SK-N-SH (cell line): ENCODE measurements at regions of chr12 and their contacts with region 1.

Region 1: GRCh38 chr12:122123051-122123760 is 44.6 kb downstream of the MLXIP start:
- DNase-seq: peak; percentile 86
- H3K4me3 ChIP-seq: no peak overlapping the region
- H3K27ac ChIP-seq: peak overlapping the region in 1 of 2 experiments; percentile 32; a peak in 1 of 4 replicates
- H3K4me1 ChIP-seq: peaks cover 2 to 4% of the 10 kb centered on the region in 2 experiments; a peak in 2 of 4 replicates
- H3K27me3 ChIP-seq: no peaks in the 10 kb centered on the region
- CTCF ChIP-seq: peak; percentile 78
- EP300 ChIP-seq: no peak
- RAD21 ChIP-seq: peak; percentile 89

Region 2: DNA sequence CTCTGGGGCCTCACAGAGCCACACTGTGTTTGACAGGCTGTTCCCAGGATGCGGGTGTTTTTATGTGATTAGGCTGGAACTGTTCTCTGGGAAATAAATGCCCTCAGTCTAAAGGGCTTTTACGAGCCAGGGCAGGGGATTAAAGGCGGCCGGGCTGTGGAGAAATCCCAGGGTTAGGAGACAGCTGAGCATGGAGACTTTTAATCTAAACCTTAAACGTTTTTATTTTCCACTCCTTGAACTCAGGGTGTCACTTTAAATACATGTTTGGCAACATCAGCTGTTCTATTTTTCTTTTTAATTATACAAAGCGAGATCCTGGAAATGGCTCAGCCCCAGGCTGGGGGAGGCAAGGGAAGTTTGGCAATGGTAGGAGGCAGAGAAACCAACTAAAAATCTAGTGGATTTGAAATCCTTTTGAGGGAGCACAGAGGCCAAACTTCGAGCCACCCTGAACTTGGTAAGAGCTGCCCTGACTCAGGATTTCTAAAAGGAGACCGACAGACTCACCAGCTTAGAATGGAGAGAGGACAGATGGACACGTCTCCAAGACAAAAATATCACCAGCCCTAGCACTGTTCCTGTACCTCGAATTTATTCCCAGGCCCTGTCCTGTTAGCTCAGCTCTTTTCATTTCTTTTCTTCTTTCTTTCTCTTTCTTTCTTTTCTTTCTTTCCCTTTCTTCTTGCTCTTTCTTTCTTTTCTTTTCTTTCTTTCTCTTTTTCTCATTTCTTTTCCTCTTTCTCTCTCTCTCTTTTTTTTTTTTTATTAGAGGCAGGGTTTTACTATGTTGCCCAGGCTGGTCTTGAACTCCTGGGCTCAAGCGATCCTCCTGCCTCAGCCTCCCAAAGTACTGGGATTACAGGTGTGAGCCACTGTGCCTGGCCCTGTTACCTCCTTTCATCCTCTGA is 512.7 kb before region 1 on chr12:
- CTCF ChIA-PET with region 1: no interaction called
- POLR2A ChIA-PET with region 1: no interaction called
- DNase-seq: no peak
- H3K4me3 ChIP-seq: no peak overlapping the region
- H3K27ac ChIP-seq: no peak overlapping the region
- H3K4me1 ChIP-seq: peaks cover 0 to 7% of the 10 kb centered on the region in 2 experiments; a peak in 1 of 4 replicates
- H3K27me3 ChIP-seq: no peaks in the 10 kb centered on the region
- CTCF ChIP-seq: no peak
- EP300 ChIP-seq: no peak
- RAD21 ChIP-seq: no peak

Region 3: DNA sequence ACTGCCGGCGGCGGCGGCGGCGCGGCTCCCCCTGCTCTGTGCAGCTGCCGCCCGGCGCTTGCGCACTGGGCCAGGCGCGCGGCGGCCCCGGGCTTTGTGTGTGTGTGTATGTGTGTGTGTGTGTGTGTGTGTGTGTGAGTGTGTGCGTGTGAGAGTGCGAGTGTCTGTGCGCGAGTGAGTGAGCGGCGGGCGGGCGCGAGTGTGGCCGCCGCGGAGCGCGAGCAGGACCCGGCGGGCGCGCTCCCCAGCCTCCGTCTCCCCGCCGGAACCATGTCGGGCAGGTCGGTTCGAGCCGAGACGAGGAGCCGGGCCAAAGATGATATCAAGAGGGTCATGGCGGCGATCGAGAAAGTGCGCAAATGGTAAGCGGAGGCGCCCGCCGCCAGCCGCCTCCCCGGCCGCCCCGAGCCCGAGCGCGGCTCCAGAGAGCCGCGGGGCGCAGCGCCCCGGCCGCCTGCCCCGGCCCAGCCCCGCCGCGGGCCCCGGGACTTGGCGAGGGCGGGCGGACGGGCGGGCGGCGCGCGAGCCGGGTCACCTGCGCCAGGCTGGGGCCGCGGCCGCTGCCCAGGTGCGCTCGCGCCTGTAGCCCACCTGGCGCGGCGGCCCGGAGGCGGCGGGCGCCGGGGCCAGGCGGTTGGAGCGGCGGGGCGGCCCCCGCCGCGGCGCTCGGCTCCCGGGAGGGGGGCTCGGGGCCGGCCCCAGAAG is 101.2 kb before region 1 on chr12 and contains the start of gene BCL7A:
- CTCF ChIA-PET with region 1: interaction called, 16 read pairs
- POLR2A ChIA-PET with region 1: no interaction called
- DNase-seq: peak; percentile 92
- H3K4me3 ChIP-seq: peak within 1 kb of the TSS; percentile 66 to 86
- H3K27ac ChIP-seq: peak within 1 kb of the TSS; percentile 74 to 93
- H3K4me1 ChIP-seq: peaks cover 10 to 20% of the 10 kb centered on the region in 2 experiments; a peak in 2 of 4 replicates
- H3K27me3 ChIP-seq: no peaks in the 10 kb centered on the region
- CTCF ChIP-seq: no peak
- EP300 ChIP-seq: no peak
- RAD21 ChIP-seq: no peak
- polyA plus RNA-seq, gene BCL7A: 30.8 and 34.0 TPM in 2 replicates

Region 4: DNA sequence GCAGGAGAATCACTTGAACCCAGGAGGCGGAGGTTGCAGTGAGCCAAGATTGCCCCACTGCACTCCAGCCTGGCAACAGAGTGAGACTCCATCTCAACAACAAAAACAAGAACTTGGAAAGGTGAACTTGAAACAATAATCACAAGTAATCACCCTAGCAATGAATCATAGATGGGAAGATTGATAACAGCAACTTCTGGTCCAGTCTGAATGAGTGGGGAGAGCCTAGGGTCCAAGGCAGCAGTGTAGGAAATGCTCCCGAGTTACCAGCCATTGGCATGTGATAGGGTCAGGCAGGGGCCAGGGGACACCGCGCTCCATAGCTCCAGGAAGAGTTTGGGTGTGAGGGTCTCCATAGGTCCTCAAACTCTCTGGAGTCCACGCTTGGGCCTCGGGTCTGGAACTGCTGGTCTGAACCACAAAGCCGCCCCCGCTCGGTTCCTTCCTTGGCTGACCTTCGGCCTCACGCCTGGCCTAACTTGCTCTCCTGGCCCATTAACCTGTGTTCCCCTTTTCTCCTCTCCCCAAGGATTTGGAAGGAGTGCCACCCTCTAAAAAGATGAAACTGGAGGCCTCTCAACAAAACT is 64.5 kb before region 1 on chr12:
- CTCF ChIA-PET with region 1: interaction called, 157 read pairs
- POLR2A ChIA-PET with region 1: interaction called, 5 read pairs
- DNase-seq: no peak
- H3K4me3 ChIP-seq: no peak overlapping the region
- H3K27ac ChIP-seq: no peak overlapping the region
- H3K4me1 ChIP-seq: peaks cover 11 to 15% of the 10 kb centered on the region in 2 experiments; a peak in 2 of 4 replicates
- H3K27me3 ChIP-seq: no peaks in the 10 kb centered on the region
- CTCF ChIP-seq: no peak
- EP300 ChIP-seq: no peak
- RAD21 ChIP-seq: no peak

Region 5: DNA sequence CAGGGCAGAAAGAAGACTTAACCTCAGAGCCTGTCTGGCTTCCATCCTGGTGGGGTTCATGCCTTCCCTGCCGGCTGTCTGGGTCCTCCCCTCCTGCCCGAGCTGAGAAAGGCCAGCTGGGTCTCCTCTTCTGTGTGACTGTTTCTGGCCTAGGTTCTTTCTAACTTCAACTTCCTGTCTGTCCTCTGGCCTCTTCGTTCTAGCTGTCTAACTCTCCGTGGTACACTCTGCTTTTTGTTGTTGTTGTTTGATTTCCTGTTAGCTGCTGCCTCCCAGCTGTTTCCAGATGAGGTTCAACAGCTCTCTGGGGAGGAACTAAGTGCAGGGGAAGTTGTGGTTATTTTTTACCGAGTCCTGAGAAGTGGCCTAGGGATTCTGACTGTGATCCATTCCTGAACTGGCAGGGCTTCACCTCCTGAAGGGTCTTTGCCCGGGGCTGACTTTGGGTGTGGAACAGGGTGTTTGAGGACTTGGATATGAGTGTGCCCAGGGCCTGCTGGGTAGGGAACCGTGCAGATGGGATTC is 41.4 kb before region 1 on chr12:
- CTCF ChIA-PET with region 1: interaction called, 22 read pairs
- POLR2A ChIA-PET with region 1: no interaction called
- DNase-seq: no peak
- H3K4me3 ChIP-seq: peak overlapping the region; percentile 13 to 74; a peak in 2 of 4 replicates
- H3K27ac ChIP-seq: peak overlapping the region; percentile 17 to 84; a peak in 3 of 4 replicates
- H3K4me1 ChIP-seq: peaks cover 15 to 36% of the 10 kb centered on the region in 2 experiments
- H3K27me3 ChIP-seq: no peaks in the 10 kb centered on the region
- CTCF ChIP-seq: no peak
- EP300 ChIP-seq: no peak
- RAD21 ChIP-seq: no peak

Region 6: GRCh38 chr12:122137681-122138080 is 14.5 kb after region 1 on chr12:
- CTCF ChIA-PET with region 1: interaction called, 10 read pairs
- POLR2A ChIA-PET with region 1: no interaction called
- DNase-seq: no peak
- H3K4me3 ChIP-seq: no peak overlapping the region
- H3K27ac ChIP-seq: no peak overlapping the region
- H3K4me1 ChIP-seq: no peaks in the 10 kb centered on the region
- H3K27me3 ChIP-seq: no peaks in the 10 kb centered on the region
- CTCF ChIP-seq: no peak
- EP300 ChIP-seq: no peak
- RAD21 ChIP-seq: no peak

Region 7: DNA sequence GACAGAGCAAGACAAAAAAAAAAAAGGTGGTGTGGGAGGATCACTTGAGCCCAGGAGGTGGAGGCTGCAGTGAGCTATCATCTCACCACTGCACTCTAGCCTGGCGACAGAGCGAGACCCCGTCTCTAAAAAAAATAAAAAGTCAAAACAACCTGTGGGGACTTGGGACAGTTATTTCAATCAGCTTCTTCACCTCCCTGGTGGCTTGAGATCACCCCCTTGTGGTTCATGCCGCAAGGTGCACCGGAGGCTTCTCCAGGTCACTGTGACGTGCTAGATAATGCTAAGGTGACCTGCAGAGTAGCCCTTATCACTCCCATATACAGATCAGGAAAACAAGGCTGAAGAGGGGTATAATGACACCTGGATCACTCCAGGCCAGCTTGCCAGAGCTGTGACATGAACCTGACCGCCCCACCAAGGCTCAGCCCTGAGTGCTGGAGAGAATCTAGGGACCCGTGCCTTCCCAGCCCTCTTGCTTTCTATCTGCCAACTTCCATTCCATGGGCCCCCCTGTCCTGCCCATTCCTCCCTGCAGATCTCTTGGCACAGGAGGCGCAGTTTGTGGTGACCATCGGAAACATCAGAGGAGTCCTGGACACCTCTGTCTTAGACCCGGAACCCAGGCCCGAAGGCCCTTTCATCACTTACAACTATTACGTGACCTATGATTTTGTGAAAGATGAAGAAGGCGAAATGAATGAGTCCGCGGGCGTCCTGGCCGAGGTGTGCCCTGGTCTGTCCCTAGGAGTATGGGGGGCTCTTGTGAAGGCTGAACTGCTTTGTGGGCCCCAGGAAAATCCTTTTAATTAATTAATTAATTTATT is 67.8 kb after region 1 on chr12:
- CTCF ChIA-PET with region 1: interaction called, 85 read pairs
- POLR2A ChIA-PET with region 1: no interaction called
- DNase-seq: peak; percentile 87
- H3K4me3 ChIP-seq: no peak overlapping the region; a peak in 1 of 4 replicates
- H3K27ac ChIP-seq: no peak overlapping the region
- H3K4me1 ChIP-seq: no peaks in the 10 kb centered on the region
- H3K27me3 ChIP-seq: no peaks in the 10 kb centered on the region
- CTCF ChIP-seq: peak; percentile 86
- EP300 ChIP-seq: no peak
- RAD21 ChIP-seq: peak; percentile 90